PC-9 (cell line): ENCODE measurements at regions of chr2 and their contacts with region 1.

Region 1: DNA sequence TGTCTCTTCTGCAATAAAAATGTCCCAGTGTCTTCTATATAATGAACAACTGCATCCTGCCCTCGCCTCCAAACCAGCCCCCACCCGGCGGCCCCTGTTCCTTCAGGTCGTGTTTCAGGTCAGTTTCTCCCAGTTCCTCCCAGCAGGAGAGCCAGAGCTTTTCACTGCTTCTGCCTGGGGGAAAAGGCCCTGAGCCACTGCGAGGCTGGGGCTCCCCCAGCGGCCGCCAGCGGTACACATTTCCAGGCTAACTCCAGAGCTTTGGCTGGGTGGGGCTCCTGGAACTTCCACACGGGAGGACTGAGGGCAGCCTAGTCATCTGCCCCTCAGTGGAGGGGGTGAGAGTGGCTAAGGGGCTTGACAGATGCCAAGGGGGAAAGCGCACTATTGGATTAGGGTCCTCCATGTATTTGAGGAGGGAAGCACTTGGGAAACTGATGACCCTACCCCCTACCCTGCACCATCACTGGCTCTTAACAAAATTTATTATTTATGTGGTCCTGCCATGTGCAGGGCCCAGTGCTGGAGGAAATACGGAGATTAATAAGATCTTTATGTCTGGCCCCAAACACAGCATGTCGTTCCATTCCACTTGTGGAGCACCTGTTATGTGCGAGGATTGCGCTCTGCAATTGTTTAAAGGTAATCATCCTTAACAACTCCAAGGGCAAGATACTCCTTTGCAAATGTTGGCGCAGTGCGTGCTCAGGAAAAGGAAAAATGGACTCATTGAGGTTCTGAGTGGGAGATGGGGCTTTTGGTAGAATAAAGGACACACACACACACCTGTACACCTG is 17.3 kb upstream of the CYS1 start:
- DNase-seq: peak; percentile 61 to 63
- H3K4me3 ChIP-seq: no peak overlapping the region
- H3K27ac ChIP-seq: no peak overlapping the region
- H3K4me1 ChIP-seq: no peaks in the 10 kb centered on the region
- H3K27me3 ChIP-seq: no peaks in the 10 kb centered on the region
- CTCF ChIP-seq: peak; percentile 94

Region 2: DNA sequence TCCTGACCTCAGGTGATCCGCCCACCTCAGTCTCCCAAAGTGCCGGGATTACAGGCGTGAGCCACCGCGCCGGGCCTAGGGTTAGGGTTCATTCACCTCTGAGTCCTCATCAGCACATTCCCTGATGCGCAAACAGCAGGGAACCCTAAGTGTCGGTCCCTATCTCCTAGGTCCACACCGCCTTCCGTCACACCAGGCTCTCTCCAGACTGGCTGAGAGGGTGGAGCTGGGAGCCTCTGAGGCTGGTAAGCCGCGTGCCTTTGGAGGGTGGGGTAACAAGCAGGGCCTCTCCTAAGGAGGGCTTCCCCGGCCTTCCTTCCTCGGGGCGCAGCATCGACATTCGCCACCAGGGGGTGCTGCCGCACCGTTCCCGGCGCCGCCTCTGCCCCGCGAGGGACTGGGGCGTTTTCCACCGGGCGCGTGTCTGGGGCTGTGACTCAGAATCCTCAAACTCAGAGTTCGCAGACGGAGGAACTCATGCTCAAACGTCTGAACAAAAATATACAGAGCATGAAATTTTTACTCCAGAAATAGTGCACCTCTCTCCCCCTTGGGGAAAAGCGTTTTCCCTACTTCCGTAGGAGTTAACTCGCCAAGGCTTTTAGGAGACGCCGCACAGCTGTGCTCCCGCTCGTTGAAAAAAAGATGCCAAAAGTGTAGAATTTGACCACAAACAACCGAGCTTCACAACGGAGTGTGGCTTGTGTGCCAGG is 954.8 kb before region 1 on chr2:
- CTCF ChIA-PET with region 1: no interaction called
- POLR2A ChIA-PET with region 1: no interaction called
- intact Hi-C with region 1: no loop called
- DNase-seq: peak; percentile 85 to 97
- H3K4me3 ChIP-seq: peak overlapping the region; percentile 23; the same call in 1 of the 2 replicates
- H3K27ac ChIP-seq: peak overlapping the region; percentile 45
- H3K4me1 ChIP-seq: peaks cover 60% of the 10 kb centered on the region
- H3K27me3 ChIP-seq: no peaks in the 10 kb centered on the region
- CTCF ChIP-seq: peak; percentile 99

Region 3: GRCh38 chr2:10064932-10065772 is 32.4 kb before region 1 on chr2:
- CTCF ChIA-PET with region 1: no interaction called
- POLR2A ChIA-PET with region 1: no interaction called
- intact Hi-C with region 1: no loop called
- DNase-seq: no peak
- H3K4me3 ChIP-seq: no peak overlapping the region
- H3K27ac ChIP-seq: no peak overlapping the region
- H3K4me1 ChIP-seq: no peaks in the 10 kb centered on the region
- H3K27me3 ChIP-seq: no peaks in the 10 kb centered on the region
- CTCF ChIP-seq: no peak

Region 4: DNA sequence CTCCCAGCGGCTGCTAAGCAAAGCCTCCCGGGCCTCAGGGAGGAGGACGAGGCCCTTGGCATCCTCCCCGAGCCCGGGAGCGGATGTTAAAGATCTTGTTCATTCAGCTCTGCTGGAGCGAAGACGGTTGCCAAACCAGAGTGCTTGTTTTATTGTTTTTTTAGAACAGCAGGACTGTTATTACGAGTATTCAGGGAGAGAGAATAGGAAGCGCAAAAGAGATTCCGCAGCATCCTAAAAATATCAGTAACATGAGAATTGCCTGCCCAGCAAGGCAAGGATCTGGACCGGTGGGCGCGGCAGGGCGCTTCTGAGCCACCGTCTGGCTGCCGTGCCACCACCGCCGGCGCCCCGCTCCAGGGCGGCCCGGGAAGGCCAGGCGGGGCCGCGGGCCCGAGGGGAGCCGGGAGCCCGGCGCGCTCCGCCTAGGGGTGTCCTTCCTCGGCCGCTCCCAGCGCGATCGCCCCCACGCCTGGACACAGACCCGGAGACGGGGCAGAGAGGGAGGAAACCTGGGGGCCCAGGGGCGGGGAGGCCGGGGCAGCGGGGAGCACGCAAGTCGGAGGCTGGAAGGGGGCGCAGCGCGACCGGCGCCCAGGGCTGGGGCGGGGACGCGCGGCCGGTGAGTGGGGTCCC is 18.2 kb before region 1 on chr2:
- CTCF ChIA-PET with region 1: interaction called, 11 read pairs
- POLR2A ChIA-PET with region 1: no interaction called
- intact Hi-C with region 1: no loop called
- DNase-seq: peak; percentile 38 to 40
- H3K4me3 ChIP-seq: peak overlapping the region; percentile 57; the same call in 1 of the 2 replicates
- H3K27ac ChIP-seq: no peak overlapping the region
- H3K4me1 ChIP-seq: 0 out of 2 replicates have a peak, but pooled peaks cover 5% of the 10 kb centered on the region
- H3K27me3 ChIP-seq: peaks cover 45% of the 10 kb centered on the region
- CTCF ChIP-seq: no peak